ENCODE measurements at regions of chr7 and their contacts with region 1.

Region 1: GRCh38 chr7:43700059-43700501 is 29.2 kb downstream of the COA1 start:
- DNase-seq: no peak
- H3K4me3 Mint-ChIP-seq: no peak overlapping the region
- H3K27ac Mint-ChIP-seq: no peak overlapping the region
- H3K4me1 Mint-ChIP-seq: peaks cover 40% of the 10 kb centered on the region
- H3K27me3 Mint-ChIP-seq: no peaks in the 10 kb centered on the region

Region 2: GRCh38 chr7:43431020-43431595 is 269.0 kb before region 1 on chr7:
- CTCF ChIA-PET with region 1: no interaction called
- intact Hi-C with region 1: no loop called
- DNase-seq: no peak
- H3K4me3 Mint-ChIP-seq: no peak overlapping the region
- H3K27ac Mint-ChIP-seq: no peak overlapping the region
- H3K4me1 Mint-ChIP-seq: no peaks in the 10 kb centered on the region
- H3K27me3 Mint-ChIP-seq: no peaks in the 10 kb centered on the region

Region 3: GRCh38 chr7:43572516-43573049 is 127.5 kb before region 1 on chr7:
- CTCF ChIA-PET with region 1: interaction called, 22 read pairs
- intact Hi-C with region 1: no loop called
- DNase-seq: peak; percentile 67
- H3K4me3 Mint-ChIP-seq: no peak overlapping the region
- H3K27ac Mint-ChIP-seq: no peak overlapping the region
- H3K4me1 Mint-ChIP-seq: peaks cover 22% of the 10 kb centered on the region
- H3K27me3 Mint-ChIP-seq: no peaks in the 10 kb centered on the region

Region 4: DNA sequence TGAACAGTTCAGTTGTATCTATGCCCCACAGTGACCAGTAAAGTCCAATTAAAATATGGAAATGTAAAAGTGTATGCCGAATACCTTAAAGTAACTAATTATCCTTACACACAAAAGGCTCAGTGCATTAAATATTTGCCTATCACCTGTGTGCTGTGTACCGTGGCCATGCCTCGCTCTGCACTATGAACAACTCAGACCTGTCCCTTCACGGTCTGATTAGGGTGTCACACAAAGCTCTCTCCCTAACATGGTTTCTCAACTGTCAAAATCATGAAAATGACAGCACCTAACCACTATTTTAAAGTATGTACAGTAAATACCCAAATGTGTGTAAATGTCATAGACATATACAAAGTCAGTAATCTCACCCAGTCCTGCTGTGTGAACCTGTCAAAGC is 74.1 kb before region 1 on chr7:
- CTCF ChIA-PET with region 1: interaction called, 34 read pairs
- intact Hi-C with region 1: no loop called
- DNase-seq: no peak
- H3K4me3 Mint-ChIP-seq: no peak overlapping the region
- H3K27ac Mint-ChIP-seq: peak overlapping the region; percentile 66
- H3K4me1 Mint-ChIP-seq: peaks cover 90% of the 10 kb centered on the region
- H3K27me3 Mint-ChIP-seq: no peaks in the 10 kb centered on the region

Region 5: DNA sequence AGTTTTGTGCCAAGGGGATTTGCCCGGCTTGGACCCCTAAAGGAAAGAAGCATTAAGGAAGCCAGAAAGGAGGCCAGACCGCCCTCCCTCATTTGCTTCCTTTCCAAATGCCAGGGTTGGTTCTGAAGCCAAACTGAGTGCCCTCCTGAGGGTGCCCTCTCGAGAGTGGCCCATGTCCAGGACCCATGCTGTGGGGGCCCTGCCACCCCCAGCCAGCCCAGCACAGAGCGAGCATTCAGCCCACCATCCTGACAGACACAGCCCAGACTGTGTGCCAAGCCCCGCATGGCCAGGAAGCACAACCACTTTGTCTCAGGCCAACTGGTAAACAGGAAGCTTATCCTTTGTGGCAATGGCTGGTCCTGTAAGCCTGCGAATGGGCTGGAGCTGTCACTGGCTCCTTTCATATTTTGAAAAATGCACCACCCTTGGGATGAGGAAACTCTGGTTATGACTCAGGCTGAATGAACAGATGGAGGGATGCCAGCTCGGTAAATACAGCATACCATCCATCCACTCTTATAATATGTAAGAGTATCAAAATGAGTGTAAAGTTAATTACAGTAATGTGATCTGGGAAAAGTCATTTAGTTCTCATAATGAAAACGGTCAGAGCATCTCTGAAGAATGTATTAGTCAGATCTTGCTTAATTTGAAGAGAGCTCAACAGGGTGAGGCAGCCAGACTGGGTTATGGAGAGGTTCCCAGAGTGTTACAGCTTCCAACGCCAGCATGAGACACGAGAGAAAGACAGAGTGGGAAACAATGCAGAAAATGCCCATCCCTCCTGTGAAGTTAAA is 52.2 kb before region 1 on chr7:
- CTCF ChIA-PET with region 1: interaction called, 61 read pairs
- intact Hi-C with region 1: loop called (anchors 1 kb)
- DNase-seq: peak; percentile 87
- H3K4me3 Mint-ChIP-seq: peak overlapping the region; percentile 62
- H3K27ac Mint-ChIP-seq: peak overlapping the region; percentile 98
- H3K4me1 Mint-ChIP-seq: peaks cover 94% of the 10 kb centered on the region
- H3K27me3 Mint-ChIP-seq: no peaks in the 10 kb centered on the region

Region 6: DNA sequence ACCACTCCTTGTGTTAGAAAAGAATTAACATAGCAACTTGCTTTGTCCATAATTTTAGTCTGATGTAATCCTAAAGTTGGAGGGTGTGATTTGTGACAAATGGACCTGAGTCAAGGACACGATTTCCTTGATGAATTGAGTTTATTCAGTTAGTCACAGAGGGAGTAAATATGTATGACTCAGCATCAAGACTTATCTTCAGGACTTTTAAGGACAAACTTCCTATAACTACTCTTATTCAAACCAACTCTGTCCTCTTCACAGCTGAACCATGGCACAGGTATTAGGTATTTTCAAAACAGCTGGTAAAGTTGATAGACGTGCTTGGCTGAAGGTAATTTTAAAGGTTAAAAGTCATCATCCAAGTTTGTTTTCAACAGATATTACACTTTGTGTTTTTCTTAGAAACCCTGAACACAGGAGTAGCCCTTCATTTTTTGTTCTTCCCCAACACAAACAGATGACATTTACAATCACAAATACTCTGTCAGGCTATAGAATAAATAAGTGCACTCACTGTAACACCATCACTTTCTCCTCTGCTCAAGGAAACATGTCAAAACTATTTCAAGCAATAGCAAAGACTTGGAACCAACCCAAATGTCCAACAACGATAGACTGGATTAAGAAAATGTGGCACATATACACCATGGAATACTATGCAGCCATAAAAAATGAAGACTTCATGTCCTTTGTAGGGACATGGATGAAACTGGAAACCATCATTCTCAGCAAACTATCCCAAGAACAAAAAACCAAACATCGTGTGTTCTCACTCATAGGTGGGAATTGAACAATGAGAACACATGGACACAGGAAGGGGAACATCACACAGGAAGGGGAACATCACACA is 25.3 kb before region 1 on chr7:
- CTCF ChIA-PET with region 1: interaction called, 13 read pairs
- intact Hi-C with region 1: loop called (anchors 1 kb)
- DNase-seq: no peak
- H3K4me3 Mint-ChIP-seq: no peak overlapping the region
- H3K27ac Mint-ChIP-seq: peak overlapping the region; percentile 30
- H3K4me1 Mint-ChIP-seq: peaks cover 85% of the 10 kb centered on the region
- H3K27me3 Mint-ChIP-seq: no peaks in the 10 kb centered on the region

Region 7: DNA sequence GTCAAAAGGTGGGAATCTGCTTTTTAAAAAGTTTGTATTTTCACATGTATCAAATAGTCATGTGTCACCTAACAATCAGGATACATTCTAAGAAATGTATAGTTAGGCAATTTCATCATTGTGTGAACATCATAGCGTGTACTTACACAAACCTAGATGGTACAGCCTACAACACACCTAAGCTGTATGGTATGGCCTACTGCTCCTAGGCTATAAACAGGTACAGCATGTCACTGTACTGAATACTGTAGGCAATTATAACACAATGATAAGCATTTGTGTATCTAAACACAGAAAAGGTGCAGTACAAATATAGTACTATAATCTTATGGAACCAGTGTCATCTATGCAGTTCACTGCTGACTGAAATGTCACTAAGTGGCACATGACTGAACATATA is 11.4 kb after region 1 on chr7:
- CTCF ChIA-PET with region 1: interaction called, 13 read pairs
- intact Hi-C with region 1: no loop called
- DNase-seq: no peak
- H3K4me3 Mint-ChIP-seq: no peak overlapping the region
- H3K27ac Mint-ChIP-seq: no peak overlapping the region
- H3K4me1 Mint-ChIP-seq: peaks cover 27% of the 10 kb centered on the region
- H3K27me3 Mint-ChIP-seq: no peaks in the 10 kb centered on the region

Region 8: GRCh38 chr7:43834463-43835251 is 134.6 kb after region 1 on chr7:
- CTCF ChIA-PET with region 1: interaction called, 65 read pairs
- intact Hi-C with region 1: loop called (anchors 1 kb)
- DNase-seq: peak; percentile 55
- H3K4me3 Mint-ChIP-seq: peak overlapping the region; percentile 64
- H3K27ac Mint-ChIP-seq: peak overlapping the region; percentile 76
- H3K4me1 Mint-ChIP-seq: peaks cover 34% of the 10 kb centered on the region
- H3K27me3 Mint-ChIP-seq: no peaks in the 10 kb centered on the region